Dendritic cell treated with granulocyte-macrophage colony-stimulating factor and Interleukin-4, amounts not matched to agents 40 ng/mL and 50 ng/mL, for 4 days (primary cell): ENCODE measurements at regions of chr4 and their contacts with region 1.

Region 1: GRCh38 chr4:75514131-75514948 is at the starts of genes RCHY1 and THAP6:
- H3K4me3 Mint-ChIP-seq: no peak within 1 kb of the TSS
- H3K27ac Mint-ChIP-seq: no peak within 1 kb of the TSS
- H3K4me1 Mint-ChIP-seq: peaks cover 26% of the 10 kb centered on the region
- H3K27me3 Mint-ChIP-seq: no peaks in the 10 kb centered on the region

Region 2: DNA sequence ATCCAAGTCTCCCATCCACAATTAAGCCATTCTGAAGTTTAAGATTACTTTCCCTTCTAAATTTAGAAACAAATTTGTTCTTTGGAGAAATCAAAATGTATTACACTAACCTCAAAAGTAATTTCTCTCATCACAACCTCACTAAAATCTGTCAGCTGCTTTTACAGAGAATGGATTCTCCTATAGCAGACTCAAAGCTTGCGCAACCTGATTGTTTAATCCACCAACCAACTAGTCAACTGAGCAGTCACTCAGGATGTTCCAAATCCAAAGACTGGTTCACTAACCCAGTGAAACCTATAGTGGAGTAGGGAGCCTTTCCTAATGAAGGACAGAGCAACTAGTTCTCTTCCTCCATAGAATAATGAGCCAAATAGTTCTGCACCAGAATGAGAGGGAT is 44.4 kb before region 1 on chr4:
- intact Hi-C with region 1: no loop called
- H3K4me3 Mint-ChIP-seq: no peak overlapping the region
- H3K27ac Mint-ChIP-seq: no peak overlapping the region
- H3K4me1 Mint-ChIP-seq: no peaks in the 10 kb centered on the region
- H3K27me3 Mint-ChIP-seq: no peaks in the 10 kb centered on the region

Region 3: GRCh38 chr4:75490155-75490554 is 24.2 kb before region 1 on chr4:
- intact Hi-C with region 1: loop called (anchors 2 kb)
- H3K4me3 Mint-ChIP-seq: no peak overlapping the region
- H3K27ac Mint-ChIP-seq: no peak overlapping the region
- H3K4me1 Mint-ChIP-seq: peaks cover 8% of the 10 kb centered on the region
- H3K27me3 Mint-ChIP-seq: no peaks in the 10 kb centered on the region

Region 4: GRCh38 chr4:75547647-75548387 is 33.5 kb after region 1 on chr4:
- intact Hi-C with region 1: no loop called
- H3K4me3 Mint-ChIP-seq: no peak overlapping the region
- H3K27ac Mint-ChIP-seq: no peak overlapping the region
- H3K4me1 Mint-ChIP-seq: peaks cover 7% of the 10 kb centered on the region
- H3K27me3 Mint-ChIP-seq: no peaks in the 10 kb centered on the region

Region 5: DNA sequence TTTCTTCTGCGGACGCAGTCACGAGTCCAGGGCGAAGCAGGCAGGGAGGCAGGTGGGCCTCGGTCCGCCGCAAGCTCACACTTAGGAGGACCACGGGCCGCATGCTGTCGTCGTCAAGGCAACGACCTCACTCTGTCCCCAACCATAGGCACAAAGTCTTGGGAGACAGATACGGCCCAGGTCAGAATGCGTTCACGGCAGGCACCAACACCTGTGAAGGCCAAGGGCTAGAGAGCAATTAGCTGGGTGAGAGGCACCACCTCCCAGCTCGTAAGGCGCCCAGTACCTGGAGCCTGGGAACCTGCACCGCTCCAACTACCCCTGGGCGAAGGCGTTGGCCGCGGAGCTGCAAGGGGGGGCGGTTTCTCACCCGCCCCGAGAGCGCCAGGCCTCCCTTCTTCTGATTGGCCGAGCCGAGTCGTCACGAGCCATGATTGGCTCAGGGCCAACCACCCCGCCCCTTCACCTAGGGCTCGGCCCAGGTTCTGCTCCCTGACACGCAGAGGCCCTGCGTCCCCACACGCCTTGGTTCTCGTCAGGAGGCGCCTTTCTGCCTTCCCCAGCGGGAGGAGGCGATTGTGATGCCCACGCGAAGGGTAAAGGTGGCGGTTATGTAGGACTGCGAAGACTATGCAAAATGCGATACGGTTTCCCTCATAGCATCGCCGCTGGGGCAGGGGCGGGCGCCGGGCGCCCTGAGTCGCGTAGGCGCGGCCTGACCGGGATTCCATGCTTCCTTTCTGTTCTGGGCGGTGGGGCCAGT is 116.0 kb after region 1 on chr4 and contains the start of gene CDKL2:
- intact Hi-C with region 1: no loop called
- H3K4me3 Mint-ChIP-seq: peak within 1 kb of the TSS; percentile 77
- H3K27ac Mint-ChIP-seq: no peak within 1 kb of the TSS
- H3K4me1 Mint-ChIP-seq: peaks cover 19% of the 10 kb centered on the region
- H3K27me3 Mint-ChIP-seq: peaks cover 24% of the 10 kb centered on the region

Region 6: DNA sequence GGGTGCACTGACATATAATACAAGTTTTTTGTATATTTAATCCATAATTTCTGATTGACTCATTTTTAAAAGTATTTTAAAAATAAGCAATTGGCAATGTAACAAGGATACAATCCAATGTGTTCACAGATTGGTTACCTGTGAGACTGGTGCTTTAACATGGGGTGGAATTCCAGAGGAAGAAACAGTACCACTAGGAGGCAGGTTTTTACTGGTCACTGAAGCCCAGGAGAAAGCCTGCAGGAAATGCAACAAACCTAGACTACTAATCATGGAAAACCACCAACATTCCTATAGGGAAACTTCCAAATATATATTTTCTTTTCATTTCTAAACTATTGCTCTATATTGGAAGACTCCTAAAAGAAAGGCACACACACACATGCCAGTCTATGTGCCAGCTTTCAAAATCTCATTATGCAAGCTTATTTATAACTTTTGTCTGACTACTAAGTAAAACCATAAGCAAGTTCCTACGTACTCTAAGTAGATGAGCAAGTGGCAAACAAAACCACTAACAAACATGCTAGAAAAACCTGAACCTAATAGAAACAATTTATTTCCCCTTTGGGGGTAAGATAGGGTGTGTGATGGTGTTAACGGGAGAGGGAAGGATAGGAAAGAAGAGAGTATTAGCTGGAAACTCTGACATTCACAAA is 139.6 kb after region 1 on chr4:
- intact Hi-C with region 1: no loop called
- H3K4me3 Mint-ChIP-seq: no peak overlapping the region
- H3K27ac Mint-ChIP-seq: no peak overlapping the region
- H3K4me1 Mint-ChIP-seq: no peaks in the 10 kb centered on the region
- H3K27me3 Mint-ChIP-seq: no peaks in the 10 kb centered on the region

Region 7: GRCh38 chr4:75724066-75724866 is 209.9 kb after region 1 on chr4 and contains the start of gene USO1:
- intact Hi-C with region 1: loop called (anchors 1 kb)
- H3K4me3 Mint-ChIP-seq: peak within 1 kb of the TSS; percentile 100
- H3K27ac Mint-ChIP-seq: peak within 1 kb of the TSS; percentile 100
- H3K4me1 Mint-ChIP-seq: peaks cover 48% of the 10 kb centered on the region
- H3K27me3 Mint-ChIP-seq: no peaks in the 10 kb centered on the region